ENCODE measurements at regions of chr11 and their contacts with region 1.

Region 1: DNA sequence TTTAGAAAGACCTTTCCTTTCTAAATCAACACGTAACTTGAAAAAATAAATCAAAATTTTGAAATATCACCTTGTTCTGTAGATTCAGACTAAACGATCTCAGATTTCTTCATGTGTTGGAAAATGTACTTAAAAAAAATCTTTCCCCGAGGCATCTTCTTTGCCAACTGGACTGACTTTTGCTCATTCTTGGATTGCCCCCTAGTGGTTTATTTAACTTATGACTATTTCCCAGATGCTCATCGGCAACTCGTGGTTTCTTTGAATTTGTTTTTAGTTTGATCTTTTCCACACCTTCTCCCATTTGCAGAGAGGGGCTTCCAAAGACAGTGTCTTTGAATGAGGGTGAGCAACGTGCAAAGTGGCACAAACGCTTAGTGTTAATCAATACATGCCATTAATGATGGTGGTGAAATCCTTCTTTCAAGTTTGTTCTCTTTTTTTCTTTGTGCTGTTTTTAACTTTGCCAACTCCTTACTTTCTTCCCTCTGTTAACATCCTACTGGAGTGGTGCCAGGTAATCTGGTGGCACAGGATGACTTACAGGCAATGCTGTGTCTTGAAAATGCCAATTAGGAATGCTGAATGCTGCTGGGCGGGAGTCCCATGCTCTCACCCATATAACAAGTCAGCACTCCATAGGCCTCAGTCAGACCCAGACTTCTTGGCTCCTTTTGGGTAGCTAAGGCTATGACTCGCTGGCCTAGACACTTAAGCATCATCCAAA is 18.3 kb downstream of the PRSS23 start:
- DNase-seq: no peak
- H3K4me3 Mint-ChIP-seq: no peak overlapping the region
- H3K27ac Mint-ChIP-seq: no peak overlapping the region
- H3K4me1 Mint-ChIP-seq: peaks cover 26% of the 10 kb centered on the region
- H3K27me3 Mint-ChIP-seq: no peaks in the 10 kb centered on the region
- CTCF ChIP-seq: peak; percentile 44

Region 2: DNA sequence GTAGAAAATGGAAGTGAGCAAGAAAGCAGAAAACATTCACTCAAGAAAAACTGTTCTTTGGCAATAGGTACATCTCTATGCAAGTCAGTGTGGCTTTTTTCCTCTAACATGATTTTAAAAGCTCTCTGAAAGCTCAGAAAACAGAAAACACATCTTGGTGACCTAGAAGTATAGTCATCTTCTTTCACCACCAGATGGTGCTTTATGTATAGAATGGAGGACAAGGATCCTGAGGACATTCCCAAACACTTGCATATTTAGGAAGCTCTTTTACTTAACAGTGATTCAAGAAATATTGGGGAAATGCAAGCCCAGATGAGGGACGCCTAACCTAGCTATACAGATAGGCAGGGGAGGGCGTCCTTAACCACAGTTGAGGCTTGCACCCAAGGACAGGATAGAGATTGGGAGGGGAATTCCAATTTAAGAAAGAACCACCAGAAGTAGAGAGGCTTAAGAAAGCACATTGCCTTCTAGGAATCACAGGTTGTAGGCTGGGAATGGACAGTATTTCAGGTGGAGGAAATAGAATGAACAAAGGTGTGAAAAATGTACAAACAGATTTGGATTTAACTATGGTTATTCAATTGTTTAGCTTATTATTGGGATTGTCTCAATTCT is 457.7 kb before region 1 on chr11:
- CTCF ChIA-PET with region 1: interaction called, 3 read pairs
- intact Hi-C with region 1: loop called (anchors 1 kb)
- DNase-seq: no peak
- H3K4me3 Mint-ChIP-seq: no peak overlapping the region
- H3K27ac Mint-ChIP-seq: no peak overlapping the region
- H3K4me1 Mint-ChIP-seq: no peaks in the 10 kb centered on the region
- H3K27me3 Mint-ChIP-seq: no peaks in the 10 kb centered on the region
- CTCF ChIP-seq: no peak

Region 3: GRCh38 chr11:86456052-86456939 is 362.3 kb before region 1 on chr11:
- CTCF ChIA-PET with region 1: no interaction called
- intact Hi-C with region 1: loop called (anchors 1 kb)
- DNase-seq: peak; percentile 72
- H3K4me3 Mint-ChIP-seq: no peak overlapping the region
- H3K27ac Mint-ChIP-seq: no peak overlapping the region
- H3K4me1 Mint-ChIP-seq: peaks cover 39% of the 10 kb centered on the region
- H3K27me3 Mint-ChIP-seq: no peaks in the 10 kb centered on the region
- CTCF ChIP-seq: peak; percentile 84

Region 4: GRCh38 chr11:86608251-86608799 is 210.3 kb before region 1 on chr11:
- CTCF ChIA-PET with region 1: no interaction called
- intact Hi-C with region 1: loop called (anchors 1 kb)
- DNase-seq: peak; percentile 52
- H3K4me3 Mint-ChIP-seq: no peak overlapping the region
- H3K27ac Mint-ChIP-seq: no peak overlapping the region
- H3K4me1 Mint-ChIP-seq: peaks cover 25% of the 10 kb centered on the region
- H3K27me3 Mint-ChIP-seq: no peaks in the 10 kb centered on the region
- CTCF ChIP-seq: no peak

Region 5: DNA sequence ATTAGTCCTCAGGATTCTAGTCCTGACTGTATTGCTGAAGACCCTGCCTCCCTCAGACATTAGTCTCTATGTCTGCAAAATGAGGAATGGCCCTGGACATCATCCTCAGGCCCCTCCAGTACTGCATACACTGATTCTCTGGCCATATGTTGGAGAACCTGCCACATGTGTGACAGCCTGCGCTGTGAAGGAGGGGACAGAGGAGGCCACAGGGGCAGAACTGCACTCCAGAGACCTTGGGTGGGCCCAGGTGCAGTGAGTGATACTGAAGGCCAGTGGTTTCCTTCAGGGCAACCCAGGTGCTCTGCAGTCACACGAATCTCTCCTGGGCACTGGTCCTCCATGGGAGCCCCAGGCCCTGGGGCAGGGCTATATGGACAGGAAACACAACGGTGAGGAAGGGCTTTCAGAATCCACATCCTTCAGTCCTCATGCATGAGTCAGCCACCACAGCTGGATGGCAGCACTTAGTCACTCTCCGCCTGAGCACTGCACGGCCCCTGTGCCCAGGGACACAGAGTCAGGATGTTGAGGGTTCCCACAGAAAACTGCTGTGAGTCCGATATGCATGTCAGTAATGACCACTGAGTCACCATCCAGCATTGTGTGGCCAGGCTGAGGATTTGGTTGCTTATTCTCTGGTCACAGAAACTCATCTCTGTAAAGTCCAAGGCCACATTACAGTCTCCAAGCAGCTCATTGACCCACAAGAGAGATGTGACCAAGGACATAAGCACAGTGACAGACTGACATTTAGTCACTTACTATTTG is 185.9 kb before region 1 on chr11:
- CTCF ChIA-PET with region 1: no interaction called
- intact Hi-C with region 1: loop called (anchors 1 kb)
- DNase-seq: peak; percentile 65
- H3K4me3 Mint-ChIP-seq: no peak overlapping the region
- H3K27ac Mint-ChIP-seq: no peak overlapping the region
- H3K4me1 Mint-ChIP-seq: peaks cover 17% of the 10 kb centered on the region
- H3K27me3 Mint-ChIP-seq: no peaks in the 10 kb centered on the region
- CTCF ChIP-seq: no peak

Region 6: GRCh38 chr11:86696004-86696403 is 122.6 kb before region 1 on chr11:
- CTCF ChIA-PET with region 1: no interaction called
- intact Hi-C with region 1: no loop called
- DNase-seq: no peak
- H3K4me3 Mint-ChIP-seq: no peak overlapping the region
- H3K27ac Mint-ChIP-seq: no peak overlapping the region
- H3K4me1 Mint-ChIP-seq: peaks cover 19% of the 10 kb centered on the region
- H3K27me3 Mint-ChIP-seq: no peaks in the 10 kb centered on the region
- CTCF ChIP-seq: no peak